Left ventricle myocardium superior (tissue), 1 donor: ENCODE measurements at regions of chr14 and their contacts with region 1.

Region 1: GRCh38 chr14:61475316-61475715 is 153.9 kb downstream of the PRKCH start:
- DNase-seq: no peak
- ATAC-seq: no peak

Region 2: GRCh38 chr14:61516964-61517653 is 41.8 kb after region 1 on chr14:
- intact Hi-C with region 1: loop called (anchors 5 kb)
- DNase-seq: no peak
- ATAC-seq: peak; percentile 63

Region 3: GRCh38 chr14:61694830-61695694 is 219.7 kb after region 1 on chr14 and contains the start of gene HIF1A:
- intact Hi-C with region 1: loop called (anchors 10 kb)
- DNase-seq: peak; percentile 97
- ATAC-seq: peak; percentile 97
- total RNA-seq, gene HIF1A: 55.0 TPM